ENCODE measurements at regions of chr2 and their contacts with region 1.

Region 1: GRCh38 chr2:54106631-54107454 is 8.6 kb upstream of the ACYP2 start:
- DNase-seq: peak in 12 of 14 experiments; percentile 11 to 77 (median 30)
- ATAC-seq: peak; percentile 78
- H3K4me3 ChIP-seq: no peak overlapping the region
- H3K4me3 Mint-ChIP-seq: no peak overlapping the region
- H3K27ac ChIP-seq: no peak overlapping the region
- H3K27ac Mint-ChIP-seq: no peak overlapping the region
- H3K4me1 ChIP-seq: peaks cover 8% of the 10 kb centered on the region
- H3K4me1 Mint-ChIP-seq: peaks cover 11% of the 10 kb centered on the region
- H3K27me3 ChIP-seq: no peaks in the 10 kb centered on the region
- H3K27me3 Mint-ChIP-seq: no peaks in the 10 kb centered on the region
- CTCF ChIP-seq: peak; percentile 66

Region 2: GRCh38 chr2:54015798-54016699 is 90.8 kb before region 1 on chr2:
- CTCF ChIA-PET with region 1: no interaction called
- POLR2A ChIA-PET with region 1: no interaction called
- intact Hi-C with region 1: no loop called
- DNase-seq: no peak
- ATAC-seq: no peak
- H3K4me3 ChIP-seq: no peak overlapping the region
- H3K4me3 Mint-ChIP-seq: no peak overlapping the region
- H3K27ac ChIP-seq: no peak overlapping the region
- H3K27ac Mint-ChIP-seq: peak overlapping the region; percentile 75
- H3K4me1 ChIP-seq: peaks cover 33% of the 10 kb centered on the region
- H3K4me1 Mint-ChIP-seq: peaks cover 46% of the 10 kb centered on the region
- H3K27me3 ChIP-seq: no peaks in the 10 kb centered on the region
- H3K27me3 Mint-ChIP-seq: no peaks in the 10 kb centered on the region
- CTCF ChIP-seq: no peak

Region 3: DNA sequence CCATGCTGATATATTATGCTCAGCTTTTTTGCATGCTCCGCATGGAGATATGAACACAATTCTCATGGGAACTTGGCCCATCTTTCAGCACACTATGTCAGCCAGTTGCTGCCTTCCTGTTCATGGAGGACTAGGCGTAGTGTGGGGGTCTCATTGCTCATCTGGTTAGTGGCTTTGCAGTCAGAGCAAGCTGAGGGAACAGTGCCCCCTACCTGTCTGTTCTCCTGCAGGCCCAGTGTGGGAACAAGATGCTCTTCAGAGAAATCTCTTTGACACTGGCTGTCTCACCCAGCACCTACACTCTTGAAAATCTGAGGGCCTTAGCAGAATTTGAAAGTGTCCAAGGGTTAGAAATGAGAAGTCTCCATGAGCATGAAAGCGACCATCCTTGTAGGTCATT is 396.3 kb after region 1 on chr2:
- CTCF ChIA-PET with region 1: no interaction called
- POLR2A ChIA-PET with region 1: no interaction called
- intact Hi-C with region 1: loop called in 1 of 2 experiments (anchors 5 kb)
- DNase-seq: peak in 8 of 14 experiments; percentile 5 to 42 (median 26)
- ATAC-seq: no peak
- H3K4me3 ChIP-seq: no peak overlapping the region
- H3K4me3 Mint-ChIP-seq: no peak overlapping the region
- H3K27ac ChIP-seq: no peak overlapping the region
- H3K27ac Mint-ChIP-seq: no peak overlapping the region
- H3K4me1 ChIP-seq: no peaks in the 10 kb centered on the region
- H3K4me1 Mint-ChIP-seq: no peaks in the 10 kb centered on the region
- H3K27me3 ChIP-seq: peaks cover 0 to 2% of the 10 kb centered on the region in 2 experiments
- H3K27me3 Mint-ChIP-seq: no peaks in the 10 kb centered on the region
- CTCF ChIP-seq: peak; percentile 10

Region 4: GRCh38 chr2:54728669-54729120 is 621.9 kb after region 1 on chr2:
- CTCF ChIA-PET with region 1: no interaction called
- POLR2A ChIA-PET with region 1: no interaction called
- intact Hi-C with region 1: no loop called
- DNase-seq: no peak
- ATAC-seq: no peak
- H3K4me3 ChIP-seq: no peak overlapping the region
- H3K4me3 Mint-ChIP-seq: no peak overlapping the region
- H3K27ac ChIP-seq: no peak overlapping the region
- H3K27ac Mint-ChIP-seq: no peak overlapping the region
- H3K4me1 ChIP-seq: peaks cover 15% of the 10 kb centered on the region
- H3K4me1 Mint-ChIP-seq: peaks cover 10% of the 10 kb centered on the region
- H3K27me3 ChIP-seq: peaks cover 10 to 21% of the 10 kb centered on the region in 2 experiments
- H3K27me3 Mint-ChIP-seq: peaks cover 71% of the 10 kb centered on the region
- CTCF ChIP-seq: no peak

Region 5: GRCh38 chr2:55431982-55432627 is 1325.3 kb after region 1 on chr2:
- CTCF ChIA-PET with region 1: no interaction called
- POLR2A ChIA-PET with region 1: no interaction called
- intact Hi-C with region 1: loop called in 1 of 2 experiments (anchors 5 kb)
- DNase-seq: peak in 3 of 14 experiments; percentile 44 to 57 (median 50)
- ATAC-seq: peak; percentile 39
- H3K4me3 ChIP-seq: no peak overlapping the region
- H3K4me3 Mint-ChIP-seq: no peak overlapping the region
- H3K27ac ChIP-seq: no peak overlapping the region
- H3K27ac Mint-ChIP-seq: no peak overlapping the region
- H3K4me1 ChIP-seq: no peaks in the 10 kb centered on the region
- H3K4me1 Mint-ChIP-seq: no peaks in the 10 kb centered on the region
- H3K27me3 ChIP-seq: no peaks in the 10 kb centered on the region
- H3K27me3 Mint-ChIP-seq: no peaks in the 10 kb centered on the region
- CTCF ChIP-seq: peak; percentile 70

Measured in CD4-positive, alpha-beta T cell (primary cell).